ENCODE measurements at regions of chr17 and their contacts with region 1.

Region 1: GRCh38 chr17:31609996-31610910 is 218.8 kb downstream of the RAB11FIP4 start:
- DNase-seq: no peak
- ATAC-seq: no peak
- H3K4me3 ChIP-seq: no peak overlapping the region
- H3K4me3 Mint-ChIP-seq: no peak overlapping the region
- H3K27ac ChIP-seq: no peak overlapping the region
- H3K27ac Mint-ChIP-seq: no peak overlapping the region
- H3K4me1 ChIP-seq: no peaks in the 10 kb centered on the region
- H3K4me1 Mint-ChIP-seq: no peaks in the 10 kb centered on the region
- H3K27me3 ChIP-seq: no peaks in the 10 kb centered on the region
- H3K27me3 Mint-ChIP-seq: no peaks in the 10 kb centered on the region
- CTCF ChIP-seq: no peak

Region 2: GRCh38 chr17:31524926-31525800 is 85.1 kb before region 1 on chr17:
- CTCF ChIA-PET with region 1: no interaction called
- POLR2A ChIA-PET with region 1: no interaction called
- intact Hi-C with region 1: no loop called
- DNase-seq: peak; percentile 75 to 95 (median 83)
- ATAC-seq: peak; percentile 80
- H3K4me3 ChIP-seq: no peak overlapping the region
- H3K4me3 Mint-ChIP-seq: no peak overlapping the region
- H3K27ac ChIP-seq: no peak overlapping the region
- H3K27ac Mint-ChIP-seq: no peak overlapping the region
- H3K4me1 ChIP-seq: no peaks in the 10 kb centered on the region
- H3K4me1 Mint-ChIP-seq: peaks cover 1% of the 10 kb centered on the region
- H3K27me3 ChIP-seq: no peaks in the 10 kb centered on the region
- H3K27me3 Mint-ChIP-seq: no peaks in the 10 kb centered on the region
- CTCF ChIP-seq: peak; percentile 90

Region 3: DNA sequence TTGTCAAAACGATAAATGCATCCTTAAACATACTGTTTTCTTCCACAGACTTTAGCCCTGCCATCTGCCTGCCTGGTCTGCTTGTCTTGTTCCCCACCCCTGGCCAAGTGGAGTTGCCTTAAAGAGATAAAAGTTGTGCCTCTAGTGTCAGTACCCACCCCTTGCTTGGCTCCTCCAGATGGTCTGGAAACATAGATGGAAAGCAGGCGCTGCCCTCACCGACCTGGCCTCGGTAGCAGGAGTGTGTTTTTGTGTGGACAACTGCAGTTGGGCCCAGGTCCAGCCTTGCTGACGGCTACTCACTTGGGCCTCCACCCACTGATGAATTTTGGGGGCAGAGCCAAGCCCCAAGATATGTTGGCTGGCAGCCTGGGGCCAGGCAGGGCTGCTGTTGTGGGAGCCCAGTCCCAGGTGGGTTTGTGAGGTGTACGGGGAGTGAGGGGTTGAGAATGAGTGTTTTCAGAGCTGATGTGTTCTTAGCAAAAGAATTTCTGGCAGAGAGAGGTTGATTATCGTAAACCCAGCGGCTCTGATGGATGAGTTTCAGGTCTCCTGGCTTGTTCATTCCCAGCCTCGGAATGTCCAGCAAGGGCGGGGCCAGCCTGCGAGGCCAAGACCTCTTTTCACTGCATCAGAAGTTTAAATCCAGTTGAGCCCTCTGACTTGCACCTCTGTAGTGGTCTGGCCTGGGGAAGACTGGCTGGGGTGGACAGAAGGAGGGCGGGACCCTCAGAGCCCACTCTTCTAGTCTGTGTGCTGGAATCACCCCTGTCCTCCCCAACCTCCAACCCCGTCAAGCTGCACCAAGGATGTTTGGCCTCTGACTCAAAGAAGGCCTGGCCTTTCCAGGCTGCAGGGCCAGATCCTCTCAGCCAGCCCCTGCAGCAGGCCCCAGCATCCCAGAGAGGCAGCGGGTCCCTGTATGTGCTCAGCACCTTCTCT is 39.0 kb before region 1 on chr17:
- CTCF ChIA-PET with region 1: no interaction called
- POLR2A ChIA-PET with region 1: no interaction called
- intact Hi-C with region 1: no loop called
- DNase-seq: no peak
- ATAC-seq: no peak
- H3K4me3 ChIP-seq: no peak overlapping the region
- H3K4me3 Mint-ChIP-seq: no peak overlapping the region
- H3K27ac ChIP-seq: no peak overlapping the region
- H3K27ac Mint-ChIP-seq: no peak overlapping the region
- H3K4me1 ChIP-seq: no peaks in the 10 kb centered on the region
- H3K4me1 Mint-ChIP-seq: no peaks in the 10 kb centered on the region
- H3K27me3 ChIP-seq: no peaks in the 10 kb centered on the region
- H3K27me3 Mint-ChIP-seq: no peaks in the 10 kb centered on the region
- CTCF ChIP-seq: no peak

Region 4: GRCh38 chr17:31678431-31678830 is 68.2 kb after region 1 on chr17:
- CTCF ChIA-PET with region 1: no interaction called
- POLR2A ChIA-PET with region 1: no interaction called
- intact Hi-C with region 1: no loop called
- DNase-seq: peak in 1 of 9 experiments; percentile 19
- ATAC-seq: no peak
- H3K4me3 ChIP-seq: no peak overlapping the region
- H3K4me3 Mint-ChIP-seq: no peak overlapping the region
- H3K27ac ChIP-seq: no peak overlapping the region
- H3K27ac Mint-ChIP-seq: no peak overlapping the region
- H3K4me1 ChIP-seq: no peaks in the 10 kb centered on the region
- H3K4me1 Mint-ChIP-seq: no peaks in the 10 kb centered on the region
- H3K27me3 ChIP-seq: no peaks in the 10 kb centered on the region
- H3K27me3 Mint-ChIP-seq: peaks cover 27% of the 10 kb centered on the region
- CTCF ChIP-seq: no peak

Region 5: DNA sequence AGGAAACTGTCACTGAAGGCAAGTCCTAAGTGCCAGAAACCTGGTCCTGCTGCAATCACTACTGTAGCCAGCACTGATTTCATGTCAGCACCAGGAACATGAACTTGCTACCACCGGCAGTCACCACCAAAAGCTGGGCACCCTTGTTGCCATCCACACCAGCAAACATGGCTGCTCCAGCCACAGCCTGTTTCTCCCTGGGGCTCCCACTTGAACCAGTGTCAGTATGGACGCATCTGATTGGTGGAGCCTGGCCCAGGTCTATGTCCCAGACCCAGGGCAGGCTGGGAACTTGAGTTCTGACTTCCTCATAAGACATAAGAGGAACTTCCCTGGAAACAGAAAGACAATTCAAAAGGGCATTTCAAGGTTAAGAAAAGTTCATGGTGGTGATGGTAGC is 192.2 kb after region 1 on chr17:
- CTCF ChIA-PET with region 1: no interaction called
- POLR2A ChIA-PET with region 1: no interaction called
- intact Hi-C with region 1: loop called in 1 of 2 experiments (anchors 1 kb)
- DNase-seq: no peak
- ATAC-seq: no peak
- H3K4me3 ChIP-seq: no peak overlapping the region
- H3K4me3 Mint-ChIP-seq: no peak overlapping the region
- H3K27ac ChIP-seq: no peak overlapping the region
- H3K27ac Mint-ChIP-seq: no peak overlapping the region
- H3K4me1 ChIP-seq: no peaks in the 10 kb centered on the region
- H3K4me1 Mint-ChIP-seq: no peaks in the 10 kb centered on the region
- H3K27me3 ChIP-seq: no peaks in the 10 kb centered on the region
- H3K27me3 Mint-ChIP-seq: no peaks in the 10 kb centered on the region
- CTCF ChIP-seq: no peak

Region 6: DNA sequence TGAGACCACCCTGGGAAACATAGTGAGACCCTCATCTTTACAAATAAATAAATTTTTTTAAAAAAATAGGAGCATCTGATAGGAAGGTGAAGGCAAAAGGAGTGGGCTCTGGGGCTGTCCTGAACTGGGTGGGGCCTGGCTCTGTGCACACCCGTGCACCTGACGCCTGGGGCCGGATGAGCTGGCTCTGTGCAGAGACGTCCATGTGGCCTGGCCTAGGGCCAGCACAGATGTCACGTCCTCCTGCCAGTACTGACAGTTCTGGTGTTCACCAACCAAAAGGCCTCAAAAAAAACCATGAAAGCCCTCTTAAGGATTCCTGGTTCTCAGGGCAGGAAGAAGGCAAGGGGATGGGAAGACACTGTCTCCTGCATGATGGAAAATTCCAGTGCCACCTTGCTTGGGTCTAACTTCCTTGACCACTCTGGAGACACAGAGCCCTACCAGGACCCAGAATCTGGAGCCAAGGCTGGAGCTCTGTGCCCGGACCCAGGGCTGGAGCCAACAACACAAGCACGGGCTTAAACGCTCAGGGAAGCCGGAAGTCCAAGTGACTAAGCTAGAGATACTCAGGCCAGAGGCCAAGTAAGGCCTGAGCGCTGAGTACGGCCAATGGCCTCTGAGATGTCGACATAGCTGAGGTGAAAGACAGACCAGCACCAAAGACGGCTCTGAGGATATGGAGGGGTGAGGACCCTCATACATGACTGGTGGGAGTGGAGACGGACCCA is 215.9 kb after region 1 on chr17:
- CTCF ChIA-PET with region 1: no interaction called
- POLR2A ChIA-PET with region 1: no interaction called
- intact Hi-C with region 1: loop called in 1 of 2 experiments (anchors 10 kb)
- DNase-seq: peak in 1 of 9 experiments; percentile 18
- ATAC-seq: no peak
- H3K4me3 ChIP-seq: no peak overlapping the region
- H3K4me3 Mint-ChIP-seq: no peak overlapping the region
- H3K27ac ChIP-seq: no peak overlapping the region
- H3K27ac Mint-ChIP-seq: no peak overlapping the region
- H3K4me1 ChIP-seq: no peaks in the 10 kb centered on the region
- H3K4me1 Mint-ChIP-seq: no peaks in the 10 kb centered on the region
- H3K27me3 ChIP-seq: no peaks in the 10 kb centered on the region
- H3K27me3 Mint-ChIP-seq: no peaks in the 10 kb centered on the region
- CTCF ChIP-seq: no peak

Region 7: GRCh38 chr17:31900877-31901276 is 290.6 kb after region 1 on chr17:
- CTCF ChIA-PET with region 1: no interaction called
- POLR2A ChIA-PET with region 1: no interaction called
- intact Hi-C with region 1: no loop called
- DNase-seq: no peak
- ATAC-seq: no peak
- H3K4me3 ChIP-seq: peak overlapping the region; percentile 65 to 72
- H3K4me3 Mint-ChIP-seq: no peak overlapping the region
- H3K27ac ChIP-seq: peak overlapping the region; percentile 57 to 71
- H3K27ac Mint-ChIP-seq: no peak overlapping the region
- H3K4me1 ChIP-seq: peaks cover 10% of the 10 kb centered on the region
- H3K4me1 Mint-ChIP-seq: peaks cover 18% of the 10 kb centered on the region
- H3K27me3 ChIP-seq: no peaks in the 10 kb centered on the region
- H3K27me3 Mint-ChIP-seq: no peaks in the 10 kb centered on the region
- CTCF ChIP-seq: no peak

Measured in CD8-positive, alpha-beta T cell (primary cell).